PC-9 (cell line): ENCODE measurements at regions of chr3 and their contacts with region 1.

Region 1: GRCh38 chr3:182618085-182618732 is 175.1 kb upstream of the ATP11B start:
- DNase-seq: peak in 1 of 2 experiments; percentile 62
- H3K4me3 ChIP-seq: no peak overlapping the region
- H3K27ac ChIP-seq: peak overlapping the region; percentile 68
- H3K4me1 ChIP-seq: peaks cover 14% of the 10 kb centered on the region
- H3K27me3 ChIP-seq: no peaks in the 10 kb centered on the region
- CTCF ChIP-seq: peak; percentile 95

Region 2: GRCh38 chr3:180782195-180782984 is 1835.8 kb before region 1 on chr3:
- CTCF ChIA-PET with region 1: interaction called, 10 read pairs
- POLR2A ChIA-PET with region 1: no interaction called
- intact Hi-C with region 1: no loop called
- DNase-seq: no peak
- H3K4me3 ChIP-seq: no peak overlapping the region
- H3K27ac ChIP-seq: no peak overlapping the region
- H3K4me1 ChIP-seq: no peaks in the 10 kb centered on the region
- H3K27me3 ChIP-seq: no peaks in the 10 kb centered on the region
- CTCF ChIP-seq: no peak

Region 3: GRCh38 chr3:181326637-181327223 is 1291.5 kb before region 1 on chr3:
- CTCF ChIA-PET with region 1: no interaction called
- POLR2A ChIA-PET with region 1: interaction called, 4 read pairs
- intact Hi-C with region 1: loop called (anchors 1 kb)
- DNase-seq: no peak
- H3K4me3 ChIP-seq: no peak overlapping the region
- H3K27ac ChIP-seq: no peak overlapping the region
- H3K4me1 ChIP-seq: no peaks in the 10 kb centered on the region
- H3K27me3 ChIP-seq: no peaks in the 10 kb centered on the region; the same call in 1 of the 2 replicates
- CTCF ChIP-seq: peak; percentile 94

Region 4: GRCh38 chr3:181709537-181710279 is 908.5 kb before region 1 on chr3:
- CTCF ChIA-PET with region 1: no interaction called
- POLR2A ChIA-PET with region 1: no interaction called
- intact Hi-C with region 1: loop called (anchors 1 kb)
- DNase-seq: peak; percentile 48 to 86
- H3K4me3 ChIP-seq: peak overlapping the region; percentile 51
- H3K27ac ChIP-seq: no peak overlapping the region
- H3K4me1 ChIP-seq: peaks cover 20% of the 10 kb centered on the region
- H3K27me3 ChIP-seq: peaks cover 22% of the 10 kb centered on the region
- CTCF ChIP-seq: peak; percentile 97

Region 5: DNA sequence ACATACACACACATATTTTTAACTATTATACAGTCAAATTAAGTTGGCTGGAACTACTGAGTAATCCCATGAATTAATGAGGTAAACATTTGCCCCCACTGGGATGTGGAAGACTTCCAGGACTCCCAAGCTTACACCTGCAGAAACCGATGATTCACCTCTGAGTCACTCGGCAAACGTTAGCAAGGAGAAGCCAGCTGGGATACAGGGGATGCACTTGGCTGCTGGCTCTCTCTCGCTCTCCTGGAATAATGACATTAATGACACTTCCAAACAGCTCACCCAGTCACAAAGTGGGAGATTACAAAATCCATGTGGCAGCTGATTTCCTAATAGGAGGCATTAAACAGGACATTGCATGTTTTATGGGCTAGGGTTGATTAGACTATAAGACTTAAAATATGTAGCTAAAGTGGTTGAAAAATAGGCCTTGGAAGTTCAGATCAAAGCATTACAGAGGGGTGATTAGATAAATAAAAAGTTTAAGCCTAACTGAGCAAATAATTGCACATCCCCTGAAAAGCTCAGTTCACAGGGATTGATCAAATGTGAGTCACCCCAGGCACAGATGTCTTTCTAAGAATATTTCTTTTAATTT is 405.6 kb before region 1 on chr3:
- CTCF ChIA-PET with region 1: no interaction called
- POLR2A ChIA-PET with region 1: no interaction called
- intact Hi-C with region 1: loop called (anchors 5 kb)
- DNase-seq: peak; percentile 87 to 100
- H3K4me3 ChIP-seq: no peak overlapping the region
- H3K27ac ChIP-seq: peak overlapping the region; percentile 62
- H3K4me1 ChIP-seq: peaks cover 25% of the 10 kb centered on the region
- H3K27me3 ChIP-seq: no peaks in the 10 kb centered on the region
- CTCF ChIP-seq: no peak

Region 6: GRCh38 chr3:182412065-182412464 is 206.1 kb before region 1 on chr3:
- CTCF ChIA-PET with region 1: no interaction called
- POLR2A ChIA-PET with region 1: no interaction called
- intact Hi-C with region 1: loop called (anchors 5 kb)
- DNase-seq: peak; percentile 67 to 95
- H3K4me3 ChIP-seq: no peak overlapping the region
- H3K27ac ChIP-seq: peak overlapping the region; percentile 50
- H3K4me1 ChIP-seq: peaks cover 15% of the 10 kb centered on the region
- H3K27me3 ChIP-seq: no peaks in the 10 kb centered on the region
- CTCF ChIP-seq: no peak

Region 7: GRCh38 chr3:182713743-182714517 is 95.7 kb after region 1 on chr3:
- CTCF ChIA-PET with region 1: interaction called, 11 read pairs
- POLR2A ChIA-PET with region 1: no interaction called
- intact Hi-C with region 1: no loop called
- DNase-seq: peak; percentile 24 to 86
- H3K4me3 ChIP-seq: no peak overlapping the region
- H3K27ac ChIP-seq: no peak overlapping the region
- H3K4me1 ChIP-seq: peaks cover 24% of the 10 kb centered on the region
- H3K27me3 ChIP-seq: no peaks in the 10 kb centered on the region
- CTCF ChIP-seq: peak; percentile 92

Region 8: GRCh38 chr3:183122257-183122932 is 504.2 kb after region 1 on chr3:
- CTCF ChIA-PET with region 1: no interaction called
- POLR2A ChIA-PET with region 1: no interaction called
- intact Hi-C with region 1: no loop called
- DNase-seq: peak; percentile 9 to 51
- H3K4me3 ChIP-seq: no peak overlapping the region
- H3K27ac ChIP-seq: no peak overlapping the region
- H3K4me1 ChIP-seq: peaks cover 17% of the 10 kb centered on the region
- H3K27me3 ChIP-seq: no peaks in the 10 kb centered on the region
- CTCF ChIP-seq: peak; percentile 99